ENCODE measurements at regions of chr1 and their contacts with region 1.

Region 1: DNA sequence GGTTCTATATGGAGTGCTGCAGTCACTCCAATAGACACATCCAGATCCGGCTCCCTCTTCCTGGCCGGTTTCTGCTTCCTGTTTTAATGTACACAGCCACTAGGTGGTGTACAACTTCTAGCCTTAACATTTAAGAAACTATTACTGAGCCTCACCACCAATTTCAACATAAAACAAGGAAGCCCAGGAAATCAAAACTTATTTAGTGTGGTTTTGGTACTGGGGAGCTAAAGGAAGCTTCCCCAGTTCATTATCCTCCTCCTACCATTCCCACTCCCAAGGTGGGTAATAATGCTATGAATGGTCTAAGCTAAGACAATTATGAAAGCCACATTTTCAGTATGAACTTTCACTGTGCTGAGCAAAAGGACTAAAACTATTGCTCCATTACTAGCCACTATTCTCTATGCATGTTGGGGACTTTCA is 25.5 kb upstream of the MTMR11 start:
- DNase-seq: no peak

Region 2: GRCh38 chr1:150010393-150011115 is 48.4 kb after region 1 on chr1 and contains the start of gene OTUD7B:
- intact Hi-C with region 1: loop called (anchors 5 kb)
- DNase-seq: peak; percentile 92
- total RNA-seq, gene OTUD7B: 32.6 TPM

Region 3: DNA sequence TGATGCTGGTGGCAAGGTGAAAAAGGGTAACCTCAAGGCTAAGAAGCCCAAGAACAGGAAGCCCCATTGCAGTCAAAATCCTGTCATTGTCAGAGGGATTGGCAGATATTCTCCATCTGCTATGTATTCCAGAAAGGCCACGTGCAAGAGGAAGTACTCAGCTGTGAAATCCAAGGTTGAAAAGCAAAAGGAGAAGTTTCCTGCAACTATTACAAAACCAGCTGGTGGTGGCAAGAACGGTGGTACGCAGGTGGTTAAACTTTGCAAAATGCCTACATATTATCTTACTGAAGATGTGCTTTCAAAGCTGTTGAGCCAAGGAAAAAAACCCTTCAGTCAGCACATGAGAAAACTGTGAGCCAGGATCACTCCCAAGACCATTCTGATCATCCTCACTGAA is 91.8 kb after region 1 on chr1:
- intact Hi-C with region 1: loop called (anchors 1 kb)
- DNase-seq: no peak

Region 4: DNA sequence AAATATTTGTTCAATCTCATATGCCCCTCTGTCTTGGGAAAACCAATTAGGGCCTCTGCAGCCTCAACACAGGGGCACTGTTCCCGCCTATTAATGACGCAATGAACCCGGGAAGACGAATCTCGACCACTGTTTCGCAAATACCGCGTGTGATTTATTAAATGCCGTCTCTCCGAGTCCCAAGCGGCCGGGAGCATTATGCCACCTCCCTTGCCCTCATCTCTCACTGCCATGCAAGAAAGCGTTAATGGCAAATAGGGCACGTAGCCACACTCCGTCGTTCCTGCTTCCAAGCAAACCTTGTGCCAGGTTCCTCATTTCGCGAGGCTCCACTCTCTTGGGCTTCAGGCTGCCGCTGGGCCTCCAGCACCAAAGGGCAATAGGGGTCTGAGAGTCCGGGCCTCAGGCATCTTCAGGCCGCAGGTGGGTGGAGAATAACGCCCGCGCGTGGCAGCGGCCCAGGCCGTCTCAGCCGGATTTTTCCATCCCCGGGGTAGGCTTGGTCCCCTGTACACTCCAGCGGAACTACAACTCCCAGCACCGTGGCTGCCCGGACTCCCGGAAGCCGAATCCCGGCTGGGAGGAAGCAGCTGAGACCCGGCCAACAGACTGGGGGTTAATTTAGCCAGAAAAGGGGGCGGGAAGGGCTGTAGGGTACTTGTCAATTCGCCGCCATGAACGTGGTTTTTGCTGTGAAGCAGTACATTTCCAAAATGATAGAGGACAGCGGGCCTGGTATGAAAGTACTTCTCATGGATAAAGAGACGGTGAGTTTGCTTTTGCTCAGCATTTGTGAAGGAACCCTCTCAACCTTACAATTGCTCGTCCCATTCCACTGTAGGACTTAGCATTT is 105.3 kb after region 1 on chr1 and contains the start of gene VPS45:
- intact Hi-C with region 1: loop called (anchors 5 kb)
- DNase-seq: peak; percentile 96
- total RNA-seq, gene VPS45: 71.6 TPM

Region 5: DNA sequence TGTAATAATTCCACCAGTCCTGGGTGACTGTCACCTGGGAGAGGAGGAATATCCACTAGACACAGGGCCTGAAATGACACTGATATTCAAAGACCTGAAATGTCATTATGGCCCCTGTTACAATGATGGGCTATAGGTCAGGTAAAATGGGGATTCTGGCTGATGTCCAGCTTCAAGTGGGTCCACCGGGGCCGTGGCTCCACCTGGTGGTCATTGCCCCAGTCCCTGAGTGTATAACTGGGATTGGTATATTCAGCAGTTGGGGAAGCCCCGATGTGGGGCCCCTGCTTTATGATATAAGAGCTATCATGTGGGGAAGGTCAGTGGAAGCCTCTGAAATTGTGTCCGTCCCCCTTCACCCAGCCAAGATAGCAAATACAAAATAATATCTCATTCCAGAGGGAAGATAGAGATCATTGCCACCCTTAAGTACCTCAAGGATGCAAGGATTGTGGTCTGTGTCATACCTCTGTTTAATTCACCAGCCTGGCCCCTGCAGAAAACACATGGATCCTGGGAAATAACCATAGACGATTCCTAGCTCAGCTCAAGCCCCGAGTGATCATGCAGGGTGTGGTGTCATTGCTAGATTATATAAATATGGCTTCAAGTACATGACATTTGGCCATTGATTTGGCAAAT is 206.9 kb after region 1 on chr1:
- intact Hi-C with region 1: loop called (anchors 2 kb)
- DNase-seq: peak; percentile 86

Region 6: DNA sequence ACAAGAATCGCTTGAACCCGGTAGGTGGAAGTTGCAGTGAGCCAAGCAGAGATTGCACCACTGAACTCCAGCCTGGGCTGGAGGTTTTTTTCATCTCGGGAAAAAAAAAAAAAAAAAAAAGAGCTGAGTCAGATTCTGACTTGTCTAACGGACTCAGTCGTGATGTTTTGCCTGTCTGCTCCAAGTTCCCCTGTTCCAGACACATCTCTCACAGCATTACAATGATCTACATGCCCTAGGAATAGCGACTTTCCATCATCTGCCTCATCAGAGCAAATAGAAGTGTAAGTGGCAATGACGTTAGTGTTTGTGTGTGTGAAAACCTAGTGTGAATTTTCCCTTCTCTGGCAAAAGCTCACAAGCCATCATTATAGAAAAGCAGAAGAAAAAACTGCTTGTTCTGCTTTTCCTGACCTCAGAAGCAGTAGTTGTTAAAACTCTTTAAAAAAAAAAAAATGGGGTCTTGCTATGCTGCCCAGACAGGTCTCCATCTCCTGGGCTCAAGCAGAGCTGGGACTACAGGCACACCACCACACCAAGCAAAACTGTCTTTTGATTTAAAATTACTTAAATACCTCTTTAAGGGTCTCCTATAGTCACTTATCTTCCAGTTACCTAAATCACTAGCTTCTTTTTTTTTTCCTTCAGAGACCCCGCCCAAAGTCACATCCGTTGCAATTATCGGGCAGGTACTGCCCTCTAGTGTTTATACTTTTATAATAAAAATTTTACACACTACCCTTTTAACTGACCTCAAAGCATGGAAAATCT is 224.8 kb after region 1 on chr1:
- intact Hi-C with region 1: loop called (anchors 5 kb)
- DNase-seq: no peak